Aorta (tissue), 5 donors: ENCODE measurements at regions of chr7 and their contacts with region 1.

Region 1: GRCh38 chr7:139075031-139075652 is 34.4 kb downstream of the ZC3HAV1 start:
- DNase-seq: peak; percentile 73 to 78
- ATAC-seq: peak; percentile 92
- H3K4me3 ChIP-seq: no peak overlapping the region
- H3K27ac ChIP-seq: no peak overlapping the region
- H3K4me1 ChIP-seq: peaks cover 0 to 2% of the 10 kb centered on the region in 2 donors
- H3K27me3 ChIP-seq: no peaks in the 10 kb centered on the region

Region 2: GRCh38 chr7:138880881-138881578 is 194.1 kb before region 1 on chr7:
- intact Hi-C with region 1: loop called (anchors 5 kb)
- DNase-seq: peak; percentile 64 to 80
- ATAC-seq: peak; percentile 27
- H3K4me3 ChIP-seq: no peak overlapping the region
- H3K27ac ChIP-seq: no peak overlapping the region
- H3K4me1 ChIP-seq: no peaks in the 10 kb centered on the region
- H3K27me3 ChIP-seq: no peaks in the 10 kb centered on the region

Region 3: GRCh38 chr7:138886501-138886917 is 188.6 kb before region 1 on chr7:
- intact Hi-C with region 1: loop called (anchors 5 kb)
- DNase-seq: no peak
- ATAC-seq: peak; percentile 70
- H3K4me3 ChIP-seq: no peak overlapping the region
- H3K27ac ChIP-seq: no peak overlapping the region
- H3K4me1 ChIP-seq: no peaks in the 10 kb centered on the region
- H3K27me3 ChIP-seq: no peaks in the 10 kb centered on the region

Region 4: DNA sequence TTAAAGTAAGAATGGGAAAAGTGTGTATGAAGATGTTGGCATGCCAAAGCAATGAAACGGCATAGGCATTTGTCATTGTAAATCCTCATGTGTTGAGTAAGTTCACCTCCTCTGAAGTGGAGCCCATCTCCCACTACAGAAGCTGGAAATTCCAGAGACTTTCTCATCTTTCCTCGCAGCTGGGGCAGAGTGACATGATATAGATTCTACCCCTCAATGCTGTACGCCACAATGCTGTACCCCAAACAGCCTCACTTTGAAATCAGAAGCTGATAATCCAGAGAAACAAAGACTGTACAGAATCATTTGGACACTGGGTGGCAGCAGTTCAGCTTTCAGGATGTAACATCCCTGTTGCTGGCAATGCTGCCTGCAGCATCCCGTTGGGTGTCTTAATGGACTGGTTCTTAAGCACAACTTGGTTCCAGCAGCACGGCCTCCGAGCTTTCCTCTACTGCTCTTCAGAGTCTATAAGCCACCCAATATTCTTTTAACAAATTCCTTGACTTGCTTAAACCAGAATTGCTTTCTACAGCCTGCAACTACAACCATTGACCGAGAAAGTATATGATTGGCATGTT is 58.1 kb before region 1 on chr7:
- intact Hi-C with region 1: loop called in 1 of 2 experiments (anchors 5 kb)
- DNase-seq: peak in 1 of 2 donors; percentile 68
- ATAC-seq: peak; percentile 60
- H3K4me3 ChIP-seq: no peak overlapping the region
- H3K27ac ChIP-seq: no peak overlapping the region
- H3K4me1 ChIP-seq: no peaks in the 10 kb centered on the region
- H3K27me3 ChIP-seq: no peaks in the 10 kb centered on the region

Region 5: DNA sequence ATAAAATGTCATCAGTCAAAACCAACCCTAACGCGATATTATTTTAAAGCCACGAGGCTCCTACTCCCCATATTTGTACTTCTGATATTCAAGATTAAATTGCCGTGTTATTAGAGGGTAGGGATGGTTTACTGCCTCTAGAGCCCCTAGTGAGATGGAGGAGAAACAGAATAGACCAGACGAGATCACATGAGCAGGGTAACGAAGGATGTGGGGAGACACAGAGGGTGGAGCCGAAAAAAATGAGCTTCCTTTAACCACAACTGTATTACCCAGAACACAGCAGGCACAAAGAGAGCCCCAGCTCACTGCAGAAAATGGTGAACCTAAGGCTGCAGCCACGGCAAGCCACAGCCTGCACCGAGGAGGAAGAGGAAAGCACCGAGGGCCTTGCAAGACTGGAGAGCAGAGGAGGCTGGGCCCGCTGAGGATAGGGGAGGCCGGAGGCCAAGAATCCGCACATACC is 20.1 kb after region 1 on chr7:
- intact Hi-C with region 1: no loop called
- DNase-seq: peak in 1 of 2 donors; percentile 59
- ATAC-seq: peak; percentile 69
- H3K4me3 ChIP-seq: no peak overlapping the region
- H3K27ac ChIP-seq: no peak overlapping the region
- H3K4me1 ChIP-seq: no peaks in the 10 kb centered on the region
- H3K27me3 ChIP-seq: no peaks in the 10 kb centered on the region

Region 6: GRCh38 chr7:139798221-139798620 is 723.1 kb after region 1 on chr7:
- intact Hi-C with region 1: no loop called
- DNase-seq: no peak
- ATAC-seq: no peak
- H3K4me3 ChIP-seq: no peak overlapping the region
- H3K27ac ChIP-seq: no peak overlapping the region
- H3K4me1 ChIP-seq: no peaks in the 10 kb centered on the region
- H3K27me3 ChIP-seq: no peaks in the 10 kb centered on the region